Caco-2 (cell line): ENCODE measurements at regions of chrX and their contacts with region 1.

Region 1: DNA sequence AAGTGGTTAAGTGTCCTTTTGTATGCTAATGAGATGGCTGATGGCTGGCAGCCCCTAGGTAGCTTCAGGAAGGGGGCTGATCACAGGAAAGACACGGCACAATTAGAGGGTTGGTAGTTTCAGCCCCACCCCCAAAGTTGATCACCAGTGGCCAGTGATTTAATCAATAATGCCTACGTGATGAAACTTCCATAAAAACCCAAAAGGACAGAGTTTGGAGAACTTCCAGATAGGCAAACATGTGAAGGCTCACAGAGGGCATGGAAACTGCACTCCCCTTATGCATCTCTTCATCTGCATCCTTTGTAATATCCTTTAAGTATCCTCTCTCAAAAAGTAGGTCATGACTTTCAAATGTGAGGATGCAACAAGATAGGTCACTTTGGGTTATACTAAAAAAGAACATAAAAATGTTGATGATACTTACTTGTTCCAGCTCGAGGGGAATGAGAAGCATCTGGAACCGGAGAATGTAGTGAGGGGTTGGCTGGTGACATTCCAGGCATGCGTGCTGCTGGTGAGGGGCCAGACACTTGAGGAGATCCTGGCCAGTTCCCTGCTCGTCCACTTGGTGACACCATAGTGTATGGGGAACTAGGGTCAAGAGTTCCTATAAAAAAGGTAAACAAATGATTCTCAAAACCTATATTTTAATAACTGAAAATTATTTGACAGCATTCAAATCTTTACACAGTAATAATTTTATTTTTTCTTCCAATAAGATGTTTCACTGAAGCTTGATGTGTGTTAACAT is 16.7 kb upstream of the CXorf38 start:
- DNase-seq: peak in 1 of 2 experiments; percentile 24
- H3K4me3 ChIP-seq: no peak overlapping the region
- H3K4me3 Mint-ChIP-seq: no peak overlapping the region
- H3K27ac Mint-ChIP-seq: no peak overlapping the region
- H3K4me1 ChIP-seq: no peaks in the 10 kb centered on the region
- H3K4me1 Mint-ChIP-seq: no peaks in the 10 kb centered on the region
- H3K27me3 ChIP-seq: no peaks in the 10 kb centered on the region
- H3K27me3 Mint-ChIP-seq: no peaks in the 10 kb centered on the region
- CTCF ChIP-seq: peak in 1 of 2 experiments; percentile 33

Region 2: GRCh38 chrX:40496728-40497127 is 167.3 kb before region 1 on chrX:
- CTCF ChIA-PET with region 1: no interaction called
- POLR2A ChIA-PET with region 1: no interaction called
- intact Hi-C with region 1: no loop called
- DNase-seq: no peak
- H3K4me3 ChIP-seq: no peak overlapping the region
- H3K4me3 Mint-ChIP-seq: no peak overlapping the region
- H3K27ac Mint-ChIP-seq: no peak overlapping the region
- H3K4me1 ChIP-seq: no peaks in the 10 kb centered on the region
- H3K4me1 Mint-ChIP-seq: no peaks in the 10 kb centered on the region
- H3K27me3 ChIP-seq: no peaks in the 10 kb centered on the region
- H3K27me3 Mint-ChIP-seq: no peaks in the 10 kb centered on the region
- CTCF ChIP-seq: no peak

Region 3: GRCh38 chrX:40735325-40736169 is 71.5 kb after region 1 on chrX and contains the start of gene MED14:
- CTCF ChIA-PET with region 1: no interaction called
- POLR2A ChIA-PET with region 1: no interaction called
- intact Hi-C with region 1: loop called (anchors 5 kb)
- DNase-seq: peak; percentile 89 to 90
- H3K4me3 ChIP-seq: peak within 1 kb of the TSS; percentile 69
- H3K4me3 Mint-ChIP-seq: peak within 1 kb of the TSS; percentile 83
- H3K27ac Mint-ChIP-seq: peak within 1 kb of the TSS; percentile 89
- H3K4me1 ChIP-seq: no peaks in the 10 kb centered on the region; the same call in 1 of the 2 replicates
- H3K4me1 Mint-ChIP-seq: peaks cover 26% of the 10 kb centered on the region
- H3K27me3 ChIP-seq: no peaks in the 10 kb centered on the region
- H3K27me3 Mint-ChIP-seq: no peaks in the 10 kb centered on the region
- CTCF ChIP-seq: peak; percentile 54 to 55
- total RNA-seq, gene MED14: 42.6 and 44.0 TPM in 2 replicates